PC-9 (cell line): ENCODE measurements at regions of chr1 and their contacts with region 1.

Region 1: DNA sequence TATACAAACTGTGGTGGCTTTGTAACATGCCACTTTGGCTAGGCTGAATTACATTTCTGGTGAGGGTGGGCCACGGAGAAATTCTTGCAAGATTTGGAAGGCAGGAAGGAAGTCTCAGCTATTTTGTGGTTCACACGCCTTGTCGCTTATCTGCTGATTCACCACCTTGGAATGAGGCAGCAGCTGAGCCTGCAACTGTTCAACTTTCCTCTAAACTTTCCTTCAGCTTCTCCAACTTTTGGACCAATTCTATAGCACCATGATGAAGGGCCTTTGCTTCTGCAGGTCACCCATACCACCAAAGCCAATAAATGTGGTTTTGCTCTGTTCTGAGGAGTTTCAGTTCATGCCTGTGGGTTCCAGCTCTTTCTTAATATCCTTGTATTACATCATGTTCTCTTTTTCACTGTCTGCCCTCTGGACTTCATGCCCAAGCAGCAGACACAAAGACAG is 337.6 kb upstream of the SNX7 start:
- DNase-seq: peak; percentile 83 to 97
- H3K4me3 ChIP-seq: peak overlapping the region; percentile 24; the same call in 1 of the 2 replicates
- H3K27ac ChIP-seq: peak overlapping the region; percentile 97
- H3K4me1 ChIP-seq: peaks cover 52% of the 10 kb centered on the region
- H3K27me3 ChIP-seq: no peaks in the 10 kb centered on the region
- CTCF ChIP-seq: no peak

Region 2: DNA sequence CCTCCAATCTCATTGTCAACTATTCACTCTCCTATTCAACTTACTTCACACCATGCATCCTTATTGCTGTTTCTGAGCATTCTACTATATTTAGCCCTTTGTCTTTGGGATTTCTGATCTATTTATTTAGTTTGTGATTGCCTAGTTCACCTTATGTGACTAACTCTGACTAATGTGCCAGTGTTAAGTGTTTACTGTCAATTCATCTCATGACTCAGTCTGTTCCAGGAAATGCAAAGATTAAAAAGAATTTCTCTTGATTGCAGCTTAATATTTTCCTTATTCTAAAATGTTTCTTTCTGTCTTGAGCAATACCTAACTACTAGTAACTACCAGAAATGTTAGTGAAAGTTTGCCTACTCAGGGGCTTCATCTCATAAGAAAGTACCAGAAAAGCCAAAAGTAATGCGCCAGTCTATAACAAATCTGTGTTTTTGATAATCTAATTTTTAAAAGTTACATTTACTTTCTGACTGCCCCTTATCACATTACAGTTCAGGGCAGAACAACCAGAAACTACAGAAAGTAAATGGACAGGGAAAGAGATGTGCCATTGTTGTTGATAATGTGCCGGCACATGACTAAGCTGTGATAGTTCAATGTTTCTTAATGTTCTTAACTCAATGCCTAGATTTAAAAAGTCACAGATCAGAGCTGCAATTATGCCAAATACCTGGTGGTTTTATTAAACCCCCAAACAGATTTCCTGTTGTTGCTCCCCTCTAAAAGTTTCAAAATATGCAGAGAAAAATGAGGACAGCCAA is 1045.9 kb before region 1 on chr1:
- CTCF ChIA-PET with region 1: no interaction called
- POLR2A ChIA-PET with region 1: no interaction called
- intact Hi-C with region 1: loop called (anchors 10 kb)
- DNase-seq: peak; percentile 3 to 97
- H3K4me3 ChIP-seq: peak overlapping the region; percentile 28; the same call in 1 of the 2 replicates
- H3K27ac ChIP-seq: peak overlapping the region; percentile 98
- H3K4me1 ChIP-seq: peaks cover 32% of the 10 kb centered on the region
- H3K27me3 ChIP-seq: no peaks in the 10 kb centered on the region
- CTCF ChIP-seq: no peak

Region 3: DNA sequence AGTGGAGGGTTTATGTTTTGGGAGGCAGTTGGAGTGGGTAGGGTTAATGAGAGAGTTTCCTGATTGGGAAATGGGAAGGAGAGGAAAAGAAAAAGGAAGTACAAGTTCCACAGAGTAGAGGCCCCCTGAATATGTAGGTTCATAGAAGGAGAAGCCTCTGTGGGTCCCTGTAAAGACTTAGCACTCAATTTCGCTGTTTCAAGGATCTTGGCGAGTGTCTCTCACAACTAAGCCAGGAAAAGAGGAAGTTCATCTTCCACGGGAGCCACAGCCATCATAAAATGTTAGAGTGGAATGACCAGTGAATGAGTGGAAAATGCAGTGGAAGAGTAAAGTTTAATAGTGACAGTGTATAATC is 385.7 kb before region 1 on chr1:
- CTCF ChIA-PET with region 1: no interaction called
- POLR2A ChIA-PET with region 1: no interaction called
- intact Hi-C with region 1: loop called (anchors 5 kb)
- DNase-seq: no peak
- H3K4me3 ChIP-seq: peak overlapping the region; percentile 1; the same call in 1 of the 2 replicates
- H3K27ac ChIP-seq: peak overlapping the region; percentile 67
- H3K4me1 ChIP-seq: peaks cover 28% of the 10 kb centered on the region
- H3K27me3 ChIP-seq: no peaks in the 10 kb centered on the region
- CTCF ChIP-seq: no peak

Region 4: GRCh38 chr1:98086796-98087441 is 237.0 kb before region 1 on chr1:
- CTCF ChIA-PET with region 1: no interaction called
- POLR2A ChIA-PET with region 1: interaction called, 10 read pairs
- intact Hi-C with region 1: loop called (anchors 1 kb)
- DNase-seq: peak; percentile 33 to 97
- H3K4me3 ChIP-seq: no peak overlapping the region
- H3K27ac ChIP-seq: peak overlapping the region; percentile 2; the same call in 1 of the 2 replicates
- H3K4me1 ChIP-seq: peaks cover 9% of the 10 kb centered on the region
- H3K27me3 ChIP-seq: no peaks in the 10 kb centered on the region
- CTCF ChIP-seq: no peak

Region 5: DNA sequence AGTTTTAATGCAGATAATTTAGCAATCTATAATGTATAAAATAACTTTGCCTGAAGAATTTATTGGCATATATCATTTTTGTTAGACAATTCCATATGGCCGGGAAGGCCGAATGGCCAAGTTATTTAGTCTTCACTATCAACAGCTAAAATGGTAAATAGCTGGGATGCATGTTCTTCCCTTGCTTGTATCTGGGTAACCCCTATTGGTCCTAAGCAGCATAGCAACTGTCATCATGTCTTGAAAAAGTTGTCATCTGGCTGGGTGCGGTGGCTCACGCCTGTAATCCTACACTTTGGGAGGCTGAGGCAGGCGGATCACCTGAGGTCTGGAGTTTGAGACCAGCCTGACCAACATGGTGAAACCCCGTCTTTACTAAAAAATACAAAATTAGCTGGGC is 63.1 kb before region 1 on chr1:
- CTCF ChIA-PET with region 1: interaction called, 5 read pairs
- POLR2A ChIA-PET with region 1: interaction called, 35 read pairs
- intact Hi-C with region 1: loop called (anchors 1 kb)
- DNase-seq: no peak
- H3K4me3 ChIP-seq: no peak overlapping the region
- H3K27ac ChIP-seq: no peak overlapping the region
- H3K4me1 ChIP-seq: peaks cover 15% of the 10 kb centered on the region
- H3K27me3 ChIP-seq: no peaks in the 10 kb centered on the region
- CTCF ChIP-seq: no peak

Region 6: DNA sequence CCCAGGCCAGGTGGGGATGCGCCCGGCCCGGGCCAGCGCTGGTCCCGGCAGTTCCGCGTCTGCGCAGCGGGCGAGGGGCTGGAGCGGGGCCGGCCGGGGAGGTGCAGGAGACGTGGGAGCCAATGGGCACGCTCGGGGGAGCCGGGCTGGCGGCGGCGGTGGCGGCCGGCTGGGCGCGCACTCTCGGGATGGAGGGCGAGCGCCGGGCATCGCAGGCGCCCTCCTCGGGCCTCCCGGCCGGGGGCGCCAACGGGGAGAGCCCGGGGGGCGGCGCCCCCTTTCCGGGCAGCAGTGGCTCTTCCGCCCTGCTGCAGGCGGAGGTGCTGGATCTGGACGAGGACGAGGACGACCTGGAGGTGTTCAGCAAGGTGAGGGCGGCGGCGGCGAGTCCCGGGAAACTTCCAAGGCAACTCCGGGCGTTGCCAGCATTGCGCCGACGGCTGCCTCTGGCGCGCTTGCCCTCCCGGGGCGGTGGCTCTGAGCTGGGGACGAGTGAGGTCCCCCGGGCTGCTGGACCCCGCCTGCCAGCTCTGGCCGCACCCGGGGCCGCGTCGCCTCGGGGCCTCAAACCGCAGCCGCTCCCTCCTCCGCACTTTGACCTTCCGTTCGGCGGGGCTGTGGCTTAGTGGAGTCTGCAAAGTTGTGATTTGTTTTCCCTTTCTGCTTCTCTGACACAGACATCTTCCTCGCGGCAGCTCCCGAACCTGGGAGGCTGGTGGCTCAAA is 337.8 kb after region 1 on chr1 and contains the start of gene SNX7:
- CTCF ChIA-PET with region 1: no interaction called
- POLR2A ChIA-PET with region 1: interaction called, 5 read pairs
- intact Hi-C with region 1: loop called (anchors 2 kb)
- DNase-seq: peak; percentile 67 to 88
- H3K4me3 ChIP-seq: peak within 1 kb of the TSS; percentile 70
- H3K27ac ChIP-seq: peak within 1 kb of the TSS; percentile 49
- H3K4me1 ChIP-seq: peaks cover 24% of the 10 kb centered on the region
- H3K27me3 ChIP-seq: no peaks in the 10 kb centered on the region
- CTCF ChIP-seq: peak; percentile 37; the same call in 1 of the 2 replicates
- total RNA-seq, gene SNX7: 25.3 and 25.4 TPM in 2 replicates